Activated naive CD4-positive, alpha-beta T cell treated with anti-CD3 and anti-CD28 coated beads, Interleukin-2, amount 10 ng/mL, durations not matched to agents 7 days and 5 days (primary cell): ENCODE measurements at regions of chr12 and their contacts with region 1.

Region 1: GRCh38 chr12:113174461-113175384 is 10.6 kb downstream of the DDX54 start:
- DNase-seq: peak; percentile 82
- H3K4me3 Mint-ChIP-seq: no peak overlapping the region
- H3K27ac Mint-ChIP-seq: no peak overlapping the region
- H3K4me1 Mint-ChIP-seq: no peaks in the 10 kb centered on the region
- H3K27me3 Mint-ChIP-seq: no peaks in the 10 kb centered on the region

Region 2: DNA sequence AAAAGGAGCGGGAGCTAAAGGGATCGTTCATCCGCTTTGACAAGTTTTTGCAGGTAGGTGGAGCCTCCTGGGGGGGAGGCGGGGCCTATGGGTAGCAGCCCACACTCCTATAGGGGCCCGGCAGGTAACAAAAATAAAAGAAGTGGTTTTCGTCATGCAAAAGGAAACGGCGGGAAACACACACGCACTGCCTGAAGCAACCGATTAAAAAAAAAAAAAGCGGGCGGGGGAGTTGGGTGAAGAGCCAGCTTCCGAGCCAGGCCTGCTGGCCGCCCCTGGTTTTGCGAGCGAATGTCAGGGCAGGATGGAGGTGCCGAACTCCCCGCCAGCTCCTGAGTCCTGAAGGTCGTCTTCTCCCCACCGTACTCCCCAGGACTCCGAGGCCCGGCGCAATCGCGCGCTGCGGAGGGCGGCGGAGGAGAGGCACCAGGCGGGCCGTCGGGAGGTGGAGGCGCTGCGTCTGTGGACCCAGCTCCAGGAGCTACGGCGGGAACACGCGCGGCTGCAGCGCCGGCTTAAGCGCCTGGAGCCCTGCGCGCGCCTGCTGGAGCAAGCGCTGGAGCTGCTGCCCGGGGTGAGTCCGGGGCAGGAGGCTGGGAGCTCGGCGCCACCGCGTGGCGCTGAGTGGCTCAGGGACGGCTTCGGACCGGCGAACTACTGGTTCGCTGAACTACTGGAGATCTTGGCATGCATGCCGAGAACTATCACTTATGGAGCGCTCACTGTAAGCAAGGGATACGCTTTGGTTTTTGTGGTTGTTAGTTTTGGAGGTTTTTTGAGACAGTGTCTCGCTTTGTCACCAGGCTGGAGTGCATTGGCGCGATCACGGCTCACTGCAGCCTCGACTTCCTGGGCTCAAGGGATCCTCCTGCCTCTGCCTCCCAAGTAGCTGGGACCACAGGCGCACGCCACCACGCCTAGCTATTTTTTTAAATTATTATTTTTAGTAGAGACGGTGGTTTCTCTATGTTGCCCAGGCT is 21.6 kb before region 1 on chr12:
- CTCF ChIA-PET with region 1: interaction called, 32 read pairs
- DNase-seq: peak; percentile 77
- H3K4me3 Mint-ChIP-seq: peak overlapping the region; percentile 74
- H3K27ac Mint-ChIP-seq: peak overlapping the region; percentile 80
- H3K4me1 Mint-ChIP-seq: peaks cover 42% of the 10 kb centered on the region
- H3K27me3 Mint-ChIP-seq: peaks cover 65% of the 10 kb centered on the region

Region 3: GRCh38 chr12:113161414-113162016 is 13.2 kb before region 1 on chr12:
- CTCF ChIA-PET with region 1: interaction called, 11 read pairs
- DNase-seq: no peak
- H3K4me3 Mint-ChIP-seq: no peak overlapping the region
- H3K27ac Mint-ChIP-seq: no peak overlapping the region
- H3K4me1 Mint-ChIP-seq: peaks cover 7% of the 10 kb centered on the region
- H3K27me3 Mint-ChIP-seq: no peaks in the 10 kb centered on the region